ENCODE measurements at regions of chr3 and their contacts with region 1.

Region 1: DNA sequence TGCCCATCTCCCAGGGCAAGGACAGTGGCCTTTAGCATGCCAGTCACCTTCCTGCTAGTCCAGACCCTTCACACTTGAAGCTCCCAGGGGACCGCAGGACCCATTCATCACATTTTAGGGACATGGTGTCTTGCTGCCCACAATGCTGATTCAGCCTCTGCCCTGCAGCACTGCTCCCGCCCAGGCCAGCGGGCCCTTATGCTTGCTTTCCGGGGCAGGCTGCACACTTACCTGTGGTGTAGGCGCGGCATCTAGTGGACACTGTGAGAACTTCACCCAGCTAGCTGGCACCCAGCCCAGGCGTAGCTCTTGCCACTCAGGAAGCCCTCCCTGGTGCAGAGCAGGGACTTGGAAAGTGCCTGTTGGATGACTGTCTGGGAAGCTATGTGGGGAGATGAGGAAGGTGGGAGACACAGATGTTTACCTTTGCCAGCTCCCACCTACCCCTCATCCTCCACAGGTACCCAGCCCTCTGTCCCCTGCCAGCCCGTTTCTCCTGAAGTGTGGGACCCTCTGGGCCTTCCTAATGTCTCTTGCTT is 26.2 kb upstream of the NR2C2 start:
- DNase-seq: peak; percentile 69
- H3K4me3 ChIP-seq: no peak overlapping the region
- H3K27ac ChIP-seq: no peak overlapping the region
- H3K4me1 ChIP-seq: peaks cover 5% of the 10 kb centered on the region
- H3K27me3 ChIP-seq: peaks cover 4% of the 10 kb centered on the region
- CTCF ChIP-seq: peak; percentile 85 to 99

Region 2: DNA sequence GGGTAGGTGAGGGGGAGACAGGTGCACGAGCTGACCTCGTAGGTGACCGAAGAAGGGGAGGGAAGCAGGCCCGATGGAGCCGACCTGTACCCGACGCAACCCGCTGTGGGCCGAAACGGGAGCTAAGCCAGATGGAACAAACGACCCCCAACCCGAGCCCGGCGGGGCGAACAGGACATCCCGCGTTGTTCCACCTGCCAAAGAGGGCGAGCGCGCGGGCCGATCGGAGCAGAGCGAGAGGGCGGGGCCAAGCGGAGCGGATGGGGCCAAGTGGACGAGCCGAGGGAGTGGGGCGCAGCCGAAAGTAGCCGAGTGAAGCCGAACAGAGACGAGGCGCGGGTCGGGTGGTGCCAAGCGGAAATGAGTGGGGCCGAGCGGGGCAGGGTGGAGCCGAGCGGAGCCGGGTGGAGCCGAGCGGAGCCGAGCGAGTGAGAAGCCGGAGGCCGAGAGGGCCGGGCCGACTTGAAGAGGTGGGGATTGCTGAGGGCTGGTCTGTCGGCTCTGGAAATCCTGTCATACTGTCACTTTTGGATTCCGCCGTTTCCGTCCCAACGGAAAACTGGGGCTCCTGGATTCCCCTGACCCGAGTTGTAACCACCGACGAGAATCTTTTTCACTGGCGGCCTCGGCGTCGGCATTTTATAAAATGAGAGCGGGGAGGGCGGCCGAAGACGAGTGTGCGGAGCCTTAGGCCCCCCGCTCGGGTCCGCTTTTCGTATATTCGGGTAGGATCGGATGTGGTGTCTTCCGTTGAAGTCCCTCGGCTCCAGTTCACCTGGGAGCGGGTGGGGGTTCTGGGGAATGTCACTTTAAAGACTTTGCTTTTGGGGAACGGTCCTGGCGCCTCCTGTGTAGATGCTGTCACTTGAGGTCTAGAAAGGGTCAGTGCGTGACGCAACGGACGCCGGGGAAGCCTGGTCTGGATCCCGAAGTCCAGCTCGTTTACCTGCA is 1025.7 kb before region 1 on chr3:
- CTCF ChIA-PET with region 1: no interaction called
- dilution Hi-C with region 1: no loop called
- in situ Hi-C with region 1: no loop called
- intact Hi-C with region 1: loop called (anchors 2 kb)
- DNase-seq: peak; percentile 93
- H3K4me3 ChIP-seq: peak overlapping the region; percentile 55 to 84 (median 63)
- H3K27ac ChIP-seq: peak overlapping the region; percentile 32
- H3K4me1 ChIP-seq: peaks cover 31% of the 10 kb centered on the region
- H3K27me3 ChIP-seq: no peaks in the 10 kb centered on the region
- CTCF ChIP-seq: no peak

Region 3: GRCh38 chr3:14508961-14509795 is 412.0 kb before region 1 on chr3:
- CTCF ChIA-PET with region 1: interaction called, 3 read pairs
- dilution Hi-C with region 1: no loop called
- in situ Hi-C with region 1: loop called in 1 of 2 experiments (anchors 25 kb)
- intact Hi-C with region 1: loop called (anchors 1 kb)
- DNase-seq: no peak
- H3K4me3 ChIP-seq: peak overlapping the region in 1 of 3 experiments; percentile 11
- H3K27ac ChIP-seq: no peak overlapping the region
- H3K4me1 ChIP-seq: peaks cover 2% of the 10 kb centered on the region
- H3K27me3 ChIP-seq: no peaks in the 10 kb centered on the region
- CTCF ChIP-seq: peak; percentile 67 to 86

Region 4: GRCh38 chr3:14791343-14791945 is 129.7 kb before region 1 on chr3:
- CTCF ChIA-PET with region 1: interaction called, 3 read pairs
- dilution Hi-C with region 1: loop called (anchors 5 kb)
- in situ Hi-C with region 1: loop called in 1 of 2 experiments (anchors 25 kb)
- intact Hi-C with region 1: loop called (anchors 1 kb)
- DNase-seq: peak; percentile 26
- H3K4me3 ChIP-seq: no peak overlapping the region
- H3K27ac ChIP-seq: no peak overlapping the region
- H3K4me1 ChIP-seq: no peaks in the 10 kb centered on the region
- H3K27me3 ChIP-seq: peaks cover 4% of the 10 kb centered on the region
- CTCF ChIP-seq: peak; percentile 52 to 82

Region 5: DNA sequence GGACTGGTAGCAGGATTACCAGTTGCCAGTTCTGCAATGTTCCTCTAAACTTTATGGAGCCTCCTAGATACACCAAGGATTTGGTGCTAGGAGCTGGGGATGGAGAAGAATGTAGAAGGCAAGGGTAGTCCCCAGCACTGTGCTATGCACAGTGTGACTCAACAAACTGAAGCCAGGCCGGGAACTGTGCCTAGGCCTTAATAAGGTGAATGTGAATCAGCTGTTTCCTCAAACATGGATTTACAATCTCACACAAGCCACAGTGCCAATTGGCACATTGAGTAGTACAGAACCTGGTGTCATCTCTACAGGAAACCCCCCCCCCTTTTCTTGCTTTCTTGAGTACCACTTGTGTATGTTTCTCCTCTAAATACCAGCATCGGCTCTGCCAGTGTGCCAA is 111.5 kb after region 1 on chr3:
- CTCF ChIA-PET with region 1: no interaction called
- dilution Hi-C with region 1: no loop called
- in situ Hi-C with region 1: loop called in 1 of 2 experiments (anchors 10 kb)
- intact Hi-C with region 1: no loop called
- DNase-seq: no peak
- H3K4me3 ChIP-seq: no peak overlapping the region
- H3K27ac ChIP-seq: no peak overlapping the region
- H3K4me1 ChIP-seq: no peaks in the 10 kb centered on the region
- H3K27me3 ChIP-seq: no peaks in the 10 kb centered on the region
- CTCF ChIP-seq: no peak

Region 6: GRCh38 chr3:15205934-15206661 is 285.0 kb after region 1 on chr3 and contains the start of gene CAPN7:
- CTCF ChIA-PET with region 1: no interaction called
- dilution Hi-C with region 1: no loop called
- in situ Hi-C with region 1: loop called in 1 of 2 experiments (anchors 25 kb)
- intact Hi-C with region 1: loop called (anchors 5 kb)
- DNase-seq: peak; percentile 89
- H3K4me3 ChIP-seq: peak within 1 kb of the TSS; percentile 93 to 96 (median 95)
- H3K27ac ChIP-seq: peak within 1 kb of the TSS; percentile 70
- H3K4me1 ChIP-seq: peaks cover 8% of the 10 kb centered on the region
- H3K27me3 ChIP-seq: no peaks in the 10 kb centered on the region
- CTCF ChIP-seq: peak; percentile 21 to 43
- total RNA-seq, gene CAPN7: 32.8 to 46.0 TPM